MCF 10A (cell line): ENCODE measurements at regions of chr12 and their contacts with region 1.

Region 1: DNA sequence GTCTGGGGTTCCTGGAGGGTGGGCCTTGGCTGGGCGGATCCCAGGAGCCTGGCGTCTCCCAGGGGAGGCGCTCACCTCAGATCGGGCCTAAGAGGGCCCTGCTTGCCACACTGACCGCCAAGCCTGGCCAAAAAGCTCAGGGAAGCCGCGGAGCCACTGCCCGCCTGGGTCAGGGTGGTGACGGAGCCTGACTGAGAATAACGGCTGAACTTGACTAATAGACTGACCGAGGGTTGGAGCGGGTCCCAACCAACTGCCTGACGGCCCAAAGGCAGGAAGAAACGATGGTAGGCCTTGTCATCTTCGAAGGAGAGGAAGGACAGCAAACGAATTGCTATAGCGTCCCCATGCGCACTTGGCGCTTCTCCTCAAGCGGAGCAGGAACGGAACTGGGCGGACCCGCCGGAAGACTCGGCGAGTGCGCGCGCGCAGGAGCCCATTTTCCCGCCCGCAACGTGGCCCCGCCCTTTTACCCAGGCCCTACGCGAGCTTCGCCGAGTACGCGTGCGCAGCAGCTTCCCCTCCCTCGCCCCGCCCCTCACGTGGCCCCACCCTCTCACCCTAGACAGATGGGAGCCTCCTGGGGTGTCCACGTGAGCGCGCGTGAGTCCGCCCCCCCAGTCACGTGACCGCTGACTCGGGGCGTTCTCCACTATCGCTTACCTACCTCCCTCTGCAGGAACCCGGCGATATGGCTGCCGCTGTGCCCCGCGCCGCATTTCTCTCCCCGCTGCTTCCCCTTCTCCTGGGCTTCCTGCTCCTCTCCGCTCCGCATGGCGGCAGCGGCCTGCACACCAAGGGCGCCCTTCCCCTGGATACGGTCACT is at the starts of genes ERP29 and TMEM116:
- DNase-seq: peak; percentile 99
- H3K4me3 Mint-ChIP-seq: peak within 1 kb of the TSS; percentile 81
- H3K27ac Mint-ChIP-seq: peak within 1 kb of the TSS; percentile 81
- H3K4me1 Mint-ChIP-seq: peaks cover 33% of the 10 kb centered on the region
- H3K27me3 Mint-ChIP-seq: no peaks in the 10 kb centered on the region
- CTCF ChIP-seq: peak; percentile 46
- total RNA-seq, gene ERP29: 124 and 126 TPM in 2 replicates
- total RNA-seq, gene TMEM116: 13.9 and 15.2 TPM in 2 replicates

Region 2: DNA sequence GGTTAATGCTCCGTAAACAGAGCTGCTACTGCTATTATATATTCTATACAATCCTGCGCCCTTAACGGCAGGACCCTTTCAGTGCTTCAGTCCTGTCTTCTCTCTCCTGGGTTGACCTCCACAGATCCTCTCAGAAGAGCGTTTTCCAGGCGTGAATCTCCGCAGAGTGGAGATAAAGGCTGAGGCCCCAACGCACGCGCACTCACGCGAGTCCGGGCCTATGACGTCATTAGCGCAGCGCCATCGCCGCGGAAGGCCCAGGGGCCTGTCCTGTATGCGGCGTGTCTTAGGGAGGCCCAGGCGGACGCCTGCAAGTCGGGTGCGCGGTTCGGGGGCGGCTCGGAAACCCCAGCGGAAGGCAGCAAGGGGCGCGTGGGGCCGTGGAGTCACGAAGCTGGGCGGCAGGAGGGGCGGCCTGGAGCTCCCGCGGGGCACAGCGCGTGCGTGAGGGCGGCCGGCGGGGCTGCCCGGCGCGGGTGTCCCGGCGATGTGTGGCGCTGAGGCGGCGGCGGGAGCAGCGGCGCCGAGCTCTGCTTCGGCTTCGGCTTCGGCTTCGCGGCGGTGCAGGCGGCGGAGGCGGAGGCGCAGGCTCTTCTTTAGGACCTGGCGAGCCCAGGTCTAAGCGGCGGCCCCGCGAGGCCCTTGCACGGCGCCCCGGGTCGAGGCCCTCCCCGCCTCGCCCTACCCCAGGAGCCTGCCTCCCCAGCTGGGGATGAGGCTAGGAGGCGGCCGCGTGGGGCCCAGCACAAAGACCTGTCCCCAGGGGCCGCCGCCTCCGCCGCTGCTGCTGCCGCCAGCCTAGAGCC is 171.0 kb before region 1 on chr12 and contains the start of gene MAPKAPK5:
- CTCF ChIA-PET with region 1: no interaction called
- POLR2A ChIA-PET with region 1: interaction called, 25 read pairs
- intact Hi-C with region 1: no loop called
- DNase-seq: peak; percentile 92
- H3K4me3 Mint-ChIP-seq: peak within 1 kb of the TSS; percentile 93
- H3K27ac Mint-ChIP-seq: peak within 1 kb of the TSS; percentile 99
- H3K4me1 Mint-ChIP-seq: peaks cover 26% of the 10 kb centered on the region
- H3K27me3 Mint-ChIP-seq: no peaks in the 10 kb centered on the region
- CTCF ChIP-seq: no peak
- total RNA-seq, gene MAPKAPK5: 46.3 and 51.3 TPM in 2 replicates

Region 3: GRCh38 chr12:111953455-111953854 is 59.5 kb before region 1 on chr12:
- CTCF ChIA-PET with region 1: interaction called, 3 read pairs
- POLR2A ChIA-PET with region 1: interaction called, 12 read pairs
- intact Hi-C with region 1: no loop called
- DNase-seq: peak; percentile 55
- H3K4me3 Mint-ChIP-seq: no peak overlapping the region
- H3K27ac Mint-ChIP-seq: no peak overlapping the region
- H3K4me1 Mint-ChIP-seq: peaks cover 13% of the 10 kb centered on the region
- H3K27me3 Mint-ChIP-seq: no peaks in the 10 kb centered on the region
- CTCF ChIP-seq: no peak

Region 4: DNA sequence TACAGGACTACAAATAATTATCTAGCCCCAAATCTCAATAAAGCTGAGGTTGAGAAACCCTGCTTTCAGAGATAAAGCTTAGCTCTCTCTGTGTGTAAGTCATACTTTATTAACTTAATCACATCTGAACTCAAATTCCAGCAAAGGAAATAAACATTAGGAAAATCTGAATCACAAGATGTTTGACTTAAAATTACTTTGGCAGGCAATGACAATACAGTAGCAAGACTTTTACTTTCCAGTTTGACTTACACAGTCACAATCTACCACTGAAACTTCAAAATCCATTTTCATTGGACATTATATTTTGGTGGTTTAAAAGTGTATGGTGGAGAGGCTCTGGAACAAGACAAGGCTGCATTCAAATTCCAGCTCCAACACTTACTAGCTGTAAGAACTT is 11.4 kb before region 1 on chr12:
- CTCF ChIA-PET with region 1: interaction called, 3 read pairs
- POLR2A ChIA-PET with region 1: interaction called, 20 read pairs
- intact Hi-C with region 1: no loop called
- DNase-seq: no peak
- H3K4me3 Mint-ChIP-seq: no peak overlapping the region
- H3K27ac Mint-ChIP-seq: no peak overlapping the region
- H3K4me1 Mint-ChIP-seq: peaks cover 12% of the 10 kb centered on the region
- H3K27me3 Mint-ChIP-seq: no peaks in the 10 kb centered on the region
- CTCF ChIP-seq: no peak

Region 5: GRCh38 chr12:112108201-112109079 is 95.5 kb after region 1 on chr12 and contains the start of gene NAA25:
- CTCF ChIA-PET with region 1: no interaction called
- POLR2A ChIA-PET with region 1: interaction called, 16 read pairs
- intact Hi-C with region 1: no loop called
- DNase-seq: peak; percentile 88
- H3K4me3 Mint-ChIP-seq: peak within 1 kb of the TSS; percentile 93
- H3K27ac Mint-ChIP-seq: peak within 1 kb of the TSS; percentile 90
- H3K4me1 Mint-ChIP-seq: peaks cover 25% of the 10 kb centered on the region
- H3K27me3 Mint-ChIP-seq: no peaks in the 10 kb centered on the region
- CTCF ChIP-seq: no peak
- total RNA-seq, gene NAA25: 37.1 and 39.2 TPM in 2 replicates

Region 6: GRCh38 chr12:112161711-112162110 is 148.7 kb after region 1 on chr12:
- CTCF ChIA-PET with region 1: no interaction called
- POLR2A ChIA-PET with region 1: no interaction called
- intact Hi-C with region 1: no loop called
- DNase-seq: no peak
- H3K4me3 Mint-ChIP-seq: no peak overlapping the region
- H3K27ac Mint-ChIP-seq: no peak overlapping the region
- H3K4me1 Mint-ChIP-seq: no peaks in the 10 kb centered on the region
- H3K27me3 Mint-ChIP-seq: no peaks in the 10 kb centered on the region
- CTCF ChIP-seq: no peak

Region 7: DNA sequence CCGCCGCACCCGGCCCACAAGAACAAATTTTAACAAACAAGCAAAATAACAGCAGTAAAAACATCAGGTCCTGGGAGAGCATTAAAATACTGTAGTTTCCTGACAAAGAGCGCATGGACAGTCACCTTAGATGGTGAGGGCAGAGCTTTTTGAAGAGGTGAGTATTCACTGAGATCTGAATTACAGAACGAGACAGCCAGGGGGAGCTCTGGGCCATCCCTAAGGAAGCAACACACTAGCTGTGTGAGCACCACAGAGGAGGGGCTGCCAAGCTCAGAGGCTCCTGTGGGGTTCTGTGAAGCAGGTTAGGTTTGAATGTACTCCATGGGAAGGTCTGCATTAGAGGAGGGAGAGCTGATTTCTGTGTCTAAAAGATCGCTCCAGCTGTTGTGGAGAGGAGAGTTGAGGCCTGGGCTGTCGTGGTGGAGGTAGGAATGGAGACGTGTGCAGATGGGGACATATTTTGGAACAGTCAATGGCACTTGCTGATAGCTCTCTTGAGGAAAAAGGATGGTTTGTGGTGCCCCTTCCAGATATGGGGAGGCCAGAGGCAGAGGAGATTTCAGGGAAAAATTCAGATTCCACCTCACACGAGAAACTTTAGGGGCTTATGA is 185.2 kb after region 1 on chr12:
- CTCF ChIA-PET with region 1: no interaction called
- POLR2A ChIA-PET with region 1: no interaction called
- intact Hi-C with region 1: no loop called
- DNase-seq: peak; percentile 62
- H3K4me3 Mint-ChIP-seq: no peak overlapping the region
- H3K27ac Mint-ChIP-seq: no peak overlapping the region
- H3K4me1 Mint-ChIP-seq: no peaks in the 10 kb centered on the region
- H3K27me3 Mint-ChIP-seq: no peaks in the 10 kb centered on the region
- CTCF ChIP-seq: peak; percentile 68

Region 8: DNA sequence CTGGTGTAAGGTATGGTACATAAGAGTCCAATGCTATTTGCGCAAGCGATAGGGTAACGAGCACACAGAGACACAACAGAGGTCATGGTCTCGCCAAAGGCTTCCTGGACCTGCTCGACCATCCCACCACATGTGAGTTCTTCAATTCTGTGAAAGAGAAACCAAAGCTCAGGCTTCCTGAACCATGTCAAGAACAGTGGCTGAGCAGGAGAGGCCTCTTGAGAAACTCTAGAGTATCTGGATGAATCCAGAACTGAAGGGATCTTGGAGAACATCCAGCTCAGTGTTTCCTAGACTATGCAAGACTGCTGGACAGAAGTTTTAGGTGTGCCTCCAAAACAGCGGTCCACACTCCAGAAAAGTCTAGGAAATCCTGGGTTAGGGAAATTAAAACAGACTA is 226.9 kb after region 1 on chr12:
- CTCF ChIA-PET with region 1: no interaction called
- POLR2A ChIA-PET with region 1: no interaction called
- intact Hi-C with region 1: no loop called
- DNase-seq: no peak
- H3K4me3 Mint-ChIP-seq: no peak overlapping the region
- H3K27ac Mint-ChIP-seq: no peak overlapping the region
- H3K4me1 Mint-ChIP-seq: no peaks in the 10 kb centered on the region
- H3K27me3 Mint-ChIP-seq: no peaks in the 10 kb centered on the region
- CTCF ChIP-seq: no peak